ENCODE measurements at regions of chr1 and their contacts with region 1.

Region 1: GRCh38 chr1:11037740-11038182 is 9.3 kb downstream of the MASP2 start:
- DNase-seq: peak; percentile 95
- ATAC-seq: peak; percentile 99
- H3K4me3 Mint-ChIP-seq: no peak overlapping the region
- H3K27ac Mint-ChIP-seq: no peak overlapping the region
- H3K4me1 Mint-ChIP-seq: peaks cover 7% of the 10 kb centered on the region
- H3K27me3 Mint-ChIP-seq: no peaks in the 10 kb centered on the region

Region 2: GRCh38 chr1:11059990-11060830 is 22.4 kb after region 1 on chr1 and contains the start of gene SRM:
- CTCF ChIA-PET with region 1: interaction called, 40 read pairs
- POLR2A ChIA-PET with region 1: no interaction called
- intact Hi-C with region 1: loop called (anchors 1 kb)
- DNase-seq: peak; percentile 95
- ATAC-seq: peak; percentile 98
- H3K4me3 Mint-ChIP-seq: peak within 1 kb of the TSS; percentile 93
- H3K27ac Mint-ChIP-seq: peak within 1 kb of the TSS; percentile 94
- H3K4me1 Mint-ChIP-seq: peaks cover 41% of the 10 kb centered on the region
- H3K27me3 Mint-ChIP-seq: no peaks in the 10 kb centered on the region
- total RNA-seq, gene SRM: 180 to 242 TPM

Region 3: GRCh38 chr1:11109047-11109760 is 71.4 kb after region 1 on chr1:
- CTCF ChIA-PET with region 1: interaction called, 13 read pairs
- POLR2A ChIA-PET with region 1: no interaction called
- intact Hi-C with region 1: no loop called
- DNase-seq: no peak
- ATAC-seq: no peak
- H3K4me3 Mint-ChIP-seq: no peak overlapping the region
- H3K27ac Mint-ChIP-seq: no peak overlapping the region
- H3K4me1 Mint-ChIP-seq: no peaks in the 10 kb centered on the region
- H3K27me3 Mint-ChIP-seq: no peaks in the 10 kb centered on the region

Region 4: DNA sequence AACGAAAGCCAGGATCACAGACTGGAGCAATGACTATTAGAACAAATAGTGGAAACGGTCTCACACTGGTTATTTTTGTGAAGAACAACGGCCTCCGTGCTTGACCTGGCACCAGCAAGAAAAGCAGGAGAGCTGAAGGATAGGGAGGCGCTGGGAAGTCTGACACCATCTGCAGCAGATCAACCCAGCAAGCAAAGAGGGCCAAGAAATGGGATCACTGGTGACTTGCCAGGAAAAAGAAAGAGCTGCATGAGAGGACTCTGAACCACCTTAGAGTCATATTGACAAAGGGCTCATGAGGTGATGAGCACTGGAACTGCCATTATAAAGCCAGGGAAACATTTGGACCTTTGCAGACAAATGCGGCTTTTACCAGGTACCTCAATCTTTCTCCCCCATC is 199.6 kb after region 1 on chr1:
- CTCF ChIA-PET with region 1: interaction called, 18 read pairs
- POLR2A ChIA-PET with region 1: no interaction called
- intact Hi-C with region 1: loop called in 1 of 2 experiments (anchors 5 kb)
- DNase-seq: no peak
- ATAC-seq: no peak
- H3K4me3 Mint-ChIP-seq: no peak overlapping the region
- H3K27ac Mint-ChIP-seq: no peak overlapping the region
- H3K4me1 Mint-ChIP-seq: peaks cover 9% of the 10 kb centered on the region
- H3K27me3 Mint-ChIP-seq: no peaks in the 10 kb centered on the region

Region 5: GRCh38 chr1:11337580-11338073 is 299.9 kb after region 1 on chr1:
- CTCF ChIA-PET with region 1: interaction called, 3 read pairs
- POLR2A ChIA-PET with region 1: no interaction called
- intact Hi-C with region 1: loop called in 1 of 2 experiments (anchors 1 kb)
- DNase-seq: peak; percentile 86
- ATAC-seq: peak; percentile 96
- H3K4me3 Mint-ChIP-seq: no peak overlapping the region
- H3K27ac Mint-ChIP-seq: no peak overlapping the region
- H3K4me1 Mint-ChIP-seq: no peaks in the 10 kb centered on the region
- H3K27me3 Mint-ChIP-seq: peaks cover 14% of the 10 kb centered on the region

Region 6: GRCh38 chr1:11719313-11720032 is 681.7 kb after region 1 on chr1:
- CTCF ChIA-PET with region 1: interaction called, 4 read pairs
- POLR2A ChIA-PET with region 1: no interaction called
- intact Hi-C with region 1: loop called in 1 of 2 experiments (anchors 5 kb)
- DNase-seq: peak; percentile 91
- ATAC-seq: peak; percentile 85
- H3K4me3 Mint-ChIP-seq: peak overlapping the region; percentile 70
- H3K27ac Mint-ChIP-seq: peak overlapping the region; percentile 71
- H3K4me1 Mint-ChIP-seq: peaks cover 13% of the 10 kb centered on the region
- H3K27me3 Mint-ChIP-seq: no peaks in the 10 kb centered on the region

Measured in activated CD4-positive, alpha-beta T cell treated with anti-CD3 and anti-CD28 coated beads for 36 hours (primary cell).